Transverse colon (tissue), 4 donors: ENCODE measurements at regions of chr13 and their contacts with region 1.

Region 1: DNA sequence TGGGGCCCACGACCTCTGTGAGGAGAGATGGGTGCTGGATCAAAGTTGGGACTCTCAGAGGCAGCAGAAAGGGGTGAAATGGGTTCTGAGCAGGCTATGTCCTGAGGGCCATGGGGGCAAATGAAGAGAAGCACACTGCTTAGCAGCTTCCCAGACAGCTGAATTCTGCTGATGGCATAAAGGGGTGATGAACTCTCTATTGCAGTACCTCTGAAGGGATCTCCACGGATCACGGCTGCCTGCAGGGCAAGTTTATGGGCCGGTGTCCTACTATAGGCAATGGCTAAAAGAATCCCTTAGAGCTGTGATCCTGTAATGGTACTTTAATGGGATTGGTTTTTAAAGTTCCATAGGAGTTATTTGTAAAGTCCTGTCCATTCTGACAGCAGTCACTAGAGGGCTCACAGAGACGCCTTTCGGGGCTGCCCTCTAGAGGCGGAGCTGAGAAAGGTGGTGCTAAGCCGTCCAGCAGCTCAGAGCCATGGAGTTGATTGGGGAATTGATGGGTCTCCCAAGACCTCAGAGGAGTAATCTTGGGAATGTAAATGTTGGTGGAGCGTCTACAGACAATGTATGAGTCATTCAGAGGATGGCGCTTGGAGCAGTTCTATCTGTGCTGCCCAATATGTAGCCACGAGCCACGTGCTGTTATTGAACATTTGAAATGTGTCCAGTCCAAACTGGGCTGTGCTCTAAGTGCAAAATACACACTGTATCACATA is 287.3 kb downstream of the COG6 start:
- DNase-seq: peak; percentile 69
- H3K4me3 ChIP-seq: no peak overlapping the region
- H3K27ac ChIP-seq: no peak overlapping the region
- H3K4me1 ChIP-seq: peaks cover 0 to 4% (median 0%) of the 10 kb centered on the region in 4 donors
- H3K27me3 ChIP-seq: no peaks in the 10 kb centered on the region
- CTCF ChIP-seq: peak; percentile 79 to 86 (median 82)
- EP300 ChIP-seq: no peak
- POLR2A ChIP-seq: no peak

Region 2: DNA sequence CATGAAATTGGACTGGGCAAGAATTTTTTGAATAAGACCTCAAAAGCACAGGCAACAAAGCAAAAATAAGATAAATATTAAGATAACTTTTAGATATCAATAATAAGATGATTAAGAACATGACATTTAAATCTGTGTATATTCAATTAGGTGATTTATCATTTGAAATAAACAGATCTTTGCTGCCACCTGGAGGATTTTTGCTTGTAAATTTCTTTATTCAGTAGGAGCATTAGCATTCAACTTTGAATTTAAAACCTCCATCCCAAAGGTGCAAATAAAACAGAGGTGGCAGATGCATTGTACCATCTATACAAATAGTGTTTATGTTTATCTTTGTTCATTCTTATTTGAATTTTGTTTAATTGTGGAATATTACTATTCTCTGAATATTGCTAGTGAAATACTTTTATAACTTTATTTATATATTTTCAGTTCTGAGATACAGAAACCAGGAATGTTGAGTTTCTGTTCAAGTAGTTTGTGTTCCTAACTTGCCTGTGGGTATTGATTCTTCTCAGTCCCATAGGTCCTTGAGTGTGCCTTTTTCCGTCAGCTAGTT is 266.3 kb before region 1 on chr13:
- in situ Hi-C with region 1: no loop called
- intact Hi-C with region 1: loop called (anchors 5 kb)
- DNase-seq: no peak
- H3K4me3 ChIP-seq: no peak overlapping the region
- H3K27ac ChIP-seq: no peak overlapping the region
- H3K4me1 ChIP-seq: peaks cover 0 to 5% (median 0%) of the 10 kb centered on the region in 4 donors
- H3K27me3 ChIP-seq: no peaks in the 10 kb centered on the region
- CTCF ChIP-seq: peak; percentile 36 to 45 (median 40)
- EP300 ChIP-seq: no peak
- POLR2A ChIP-seq: no peak